H1 (cell line): ENCODE measurements at regions of chr16 and their contacts with region 1.

Region 1: DNA sequence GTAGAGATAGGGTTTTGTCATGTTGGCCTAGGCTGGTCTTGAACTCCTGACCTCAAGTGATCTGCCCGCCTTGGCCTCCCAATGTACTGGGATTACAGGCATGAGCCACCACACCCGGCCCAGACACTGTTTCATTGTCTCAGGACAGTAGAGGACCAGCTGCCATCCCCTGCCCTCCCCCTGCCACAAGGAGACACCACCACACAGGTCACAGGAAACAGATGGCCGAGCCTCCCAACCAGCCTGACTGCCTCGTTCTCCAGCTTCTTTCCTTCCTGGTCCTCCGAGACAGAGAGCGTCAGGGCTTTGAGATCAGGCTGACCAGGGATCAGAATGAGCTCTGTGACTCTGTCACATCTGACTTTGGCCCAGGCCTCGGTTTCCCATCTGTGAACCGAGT is 20.8 kb upstream of the RNPS1 start:
- DNase-seq: no peak
- H3K4me3 ChIP-seq: no peak overlapping the region
- H3K27ac ChIP-seq: no peak overlapping the region
- H3K4me1 ChIP-seq: no peaks in the 10 kb centered on the region; a peak in 1 of 7 replicates
- H3K27me3 ChIP-seq: no peaks in the 10 kb centered on the region
- CTCF ChIP-seq: no peak
- EP300 ChIP-seq: no peak
- POLR2A ChIP-seq: no peak
- RAD21 ChIP-seq: no peak

Region 2: DNA sequence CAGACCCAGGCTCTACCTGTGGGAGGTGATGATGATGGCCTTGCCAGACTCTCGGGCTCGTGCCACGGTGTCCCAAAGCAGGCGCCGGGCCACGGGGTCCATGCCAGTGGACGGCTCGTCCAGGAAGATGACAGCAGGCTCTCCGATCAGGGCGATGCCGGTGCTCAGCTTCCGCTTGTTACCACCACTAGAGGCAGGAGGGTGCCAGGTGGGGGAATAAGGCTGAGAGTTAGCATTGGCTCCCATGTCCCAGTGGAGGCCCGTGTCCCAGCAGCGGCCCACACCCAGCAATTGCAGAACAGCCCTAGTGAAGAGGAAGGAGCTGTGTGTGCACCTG is 10.5 kb before region 1 on chr16:
- CTCF ChIA-PET with region 1: interaction called, 30 read pairs
- POLR2A ChIA-PET with region 1: interaction called, 3 read pairs
- DNase-seq: no peak
- H3K4me3 ChIP-seq: no peak overlapping the region
- H3K27ac ChIP-seq: no peak overlapping the region
- H3K4me1 ChIP-seq: no peaks in the 10 kb centered on the region; a peak in 1 of 7 replicates
- H3K27me3 ChIP-seq: no peaks in the 10 kb centered on the region
- CTCF ChIP-seq: peak; percentile 53 to 66 (median 54)
- EP300 ChIP-seq: no peak
- POLR2A ChIP-seq: no peak
- RAD21 ChIP-seq: peak; percentile 38 to 48

Region 3: GRCh38 chr16:2474877-2475412 is 186.2 kb after region 1 on chr16 and contains the start of gene TBC1D24:
- CTCF ChIA-PET with region 1: no interaction called
- POLR2A ChIA-PET with region 1: no interaction called
- DNase-seq: peak in 1 of 2 experiments; percentile 90
- H3K4me3 ChIP-seq: peak within 1 kb of the TSS; percentile 61 to 93 (median 72)
- H3K27ac ChIP-seq: no peak within 1 kb of the TSS
- H3K4me1 ChIP-seq: peaks cover 0 to 30% (median 14%) of the 10 kb centered on the region in 4 experiments; a peak in 6 of 7 replicates
- H3K27me3 ChIP-seq: peaks cover 20 to 55% (median 43%) of the 10 kb centered on the region in 4 experiments
- CTCF ChIP-seq: no peak
- EP300 ChIP-seq: no peak
- POLR2A ChIP-seq: no peak
- RAD21 ChIP-seq: no peak
- total RNA-seq, gene TBC1D24: 18.6 and 21.5 TPM in 2 replicates